Lower lobe of right lung (tissue), 2 donors: ENCODE measurements at regions of chrX and their contacts with region 1.

Region 1: GRCh38 chrX:103464774-103465117 is 54.5 kb downstream of the RAB40A start:
- DNase-seq: peak; percentile 51
- ATAC-seq: peak; percentile 94 to 96
- H3K4me3 ChIP-seq: peak overlapping the region; percentile 38
- H3K27ac ChIP-seq: no peak overlapping the region
- H3K4me1 ChIP-seq: no peaks in the 10 kb centered on the region
- H3K27me3 ChIP-seq: no peaks in the 10 kb centered on the region
- CTCF ChIP-seq: peak; percentile 74

Region 2: DNA sequence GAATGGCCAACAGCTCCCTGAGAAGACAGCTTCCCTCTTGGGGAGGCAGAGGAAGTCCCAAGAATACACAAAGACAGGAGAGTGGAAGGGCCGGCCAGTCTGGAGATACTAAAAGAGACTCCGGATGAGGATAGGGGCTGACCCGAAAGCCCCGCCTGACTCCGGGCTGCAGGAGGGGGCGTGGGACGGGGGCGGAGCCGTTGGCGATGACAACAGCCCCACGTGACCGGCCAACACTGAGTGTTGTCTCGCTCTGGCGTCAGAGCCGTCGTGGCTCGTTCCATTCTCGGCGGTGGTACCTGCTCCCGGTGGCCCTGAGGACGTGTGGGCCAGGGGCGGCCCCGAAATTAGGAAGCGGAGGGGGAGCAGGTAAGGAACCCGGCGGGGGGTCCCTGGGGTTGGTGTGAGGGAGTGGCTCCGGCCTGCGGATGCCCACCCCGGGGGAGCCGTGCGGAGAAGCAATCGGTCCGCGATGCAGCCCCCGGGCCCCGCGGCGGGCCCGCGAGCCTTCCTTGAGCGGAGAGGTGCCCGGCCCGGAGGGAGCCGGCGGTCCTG is 249.8 kb before region 1 on chrX and contains the start of gene BEX4:
- intact Hi-C with region 1: loop called (anchors 10 kb)
- DNase-seq: peak; percentile 88
- ATAC-seq: peak; percentile 98
- H3K4me3 ChIP-seq: peak within 1 kb of the TSS; percentile 70
- H3K27ac ChIP-seq: peak within 1 kb of the TSS; percentile 86
- H3K4me1 ChIP-seq: no peaks in the 10 kb centered on the region
- H3K27me3 ChIP-seq: no peaks in the 10 kb centered on the region
- CTCF ChIP-seq: no peak
- total RNA-seq, gene BEX4: 37.3 TPM

Region 3: DNA sequence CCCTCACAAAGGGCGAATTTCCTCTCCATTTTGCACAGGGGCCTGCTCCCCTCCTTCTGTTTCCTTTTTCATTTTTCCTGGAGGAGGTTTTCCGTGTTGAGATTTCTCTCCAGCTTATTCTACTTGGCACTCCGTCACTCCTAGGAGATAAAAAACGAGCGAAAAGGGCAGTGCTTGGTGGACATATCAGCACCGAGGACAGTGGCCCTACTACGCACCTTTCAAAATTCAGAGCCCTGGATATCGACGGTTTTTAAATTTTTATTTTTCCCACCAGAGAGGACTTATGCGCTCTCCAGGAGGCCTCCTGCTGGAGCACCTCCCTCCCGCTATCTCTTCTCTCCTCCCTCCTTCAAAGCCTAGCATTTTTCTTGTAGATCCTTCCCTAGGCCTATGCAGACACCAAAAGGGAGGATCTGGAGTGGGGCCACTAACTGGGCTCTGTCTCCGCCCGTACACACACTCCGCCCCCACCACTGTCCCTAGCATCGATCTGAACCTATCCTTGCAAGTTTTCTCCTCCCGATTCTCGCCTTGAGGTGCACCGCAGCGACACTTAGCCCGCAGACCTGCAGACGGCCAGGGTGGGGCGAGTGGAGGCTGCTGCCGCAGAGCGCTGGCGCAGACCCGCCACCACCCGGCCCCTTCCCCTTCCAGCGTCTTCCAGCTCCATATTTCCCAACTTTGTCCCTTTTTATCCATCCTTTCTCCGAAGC is 116.9 kb before region 1 on chrX:
- intact Hi-C with region 1: loop called (anchors 5 kb)
- DNase-seq: no peak
- ATAC-seq: no peak
- H3K4me3 ChIP-seq: no peak overlapping the region
- H3K27ac ChIP-seq: no peak overlapping the region
- H3K4me1 ChIP-seq: no peaks in the 10 kb centered on the region
- H3K27me3 ChIP-seq: no peaks in the 10 kb centered on the region
- CTCF ChIP-seq: no peak

Region 4: GRCh38 chrX:103431316-103431715 is 33.4 kb before region 1 on chrX:
- intact Hi-C with region 1: no loop called
- DNase-seq: no peak
- ATAC-seq: no peak
- H3K4me3 ChIP-seq: no peak overlapping the region
- H3K27ac ChIP-seq: peak overlapping the region; percentile 11
- H3K4me1 ChIP-seq: no peaks in the 10 kb centered on the region
- H3K27me3 ChIP-seq: no peaks in the 10 kb centered on the region
- CTCF ChIP-seq: no peak